Activated CD4-positive, alpha-beta memory T cell treated with anti-CD3 and anti-CD28 coated beads, Interleukin-2, amount 10 ng/mL, durations not matched to agents 7 days and 5 days (primary cell): ENCODE measurements at regions of chr4 and their contacts with region 1.

Region 1: DNA sequence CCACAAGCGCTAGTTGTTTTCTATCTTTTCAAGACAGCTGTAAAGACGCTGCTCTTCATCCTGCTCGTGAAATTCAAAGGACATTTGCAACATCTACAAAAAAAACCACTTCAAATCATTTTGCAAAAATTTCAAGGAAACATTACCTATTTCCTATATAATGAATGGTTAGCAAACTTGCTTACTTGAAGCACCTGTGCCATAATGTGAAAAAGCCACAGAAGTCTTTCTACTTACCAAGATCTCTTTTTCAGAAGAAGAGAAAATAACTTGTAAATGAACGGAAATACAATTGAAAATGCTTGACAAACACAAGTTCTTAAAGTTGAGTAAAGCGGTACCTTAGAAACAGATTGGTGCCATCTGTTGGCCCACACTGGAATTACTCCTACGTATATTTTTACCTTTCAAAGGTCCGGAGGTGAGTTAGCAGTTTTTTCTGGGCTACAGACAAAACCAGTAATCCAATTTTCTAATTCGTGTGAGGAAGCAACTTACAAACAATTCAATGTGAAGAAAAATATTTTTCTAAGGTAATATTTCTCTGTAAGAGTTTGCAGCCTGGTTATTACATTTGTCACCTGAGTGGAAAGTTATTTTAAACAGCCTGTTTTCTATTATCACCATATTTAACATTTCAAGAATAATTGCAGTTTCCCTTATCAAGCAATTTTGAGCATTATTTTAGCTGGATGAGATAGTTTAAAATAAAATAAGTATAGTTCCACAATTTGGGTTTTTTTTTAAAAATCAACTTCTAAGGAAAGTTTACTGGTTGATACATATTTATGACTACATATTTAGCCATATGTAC is at the start of gene TLR6:
- DNase-seq: peak; percentile 70
- H3K4me3 Mint-ChIP-seq: peak within 1 kb of the TSS; percentile 77
- H3K27ac Mint-ChIP-seq: peak within 1 kb of the TSS; percentile 85
- H3K4me1 Mint-ChIP-seq: peaks cover 39% of the 10 kb centered on the region
- H3K27me3 Mint-ChIP-seq: peaks cover 3% of the 10 kb centered on the region
- total RNA-seq, gene TLR6: 3.9 to 5.4 TPM

Region 2: GRCh38 chr4:38759113-38759789 is 97.5 kb before region 1 on chr4:
- CTCF ChIA-PET with region 1: interaction called, 80 read pairs
- POLR2A ChIA-PET with region 1: interaction called, 14 read pairs
- DNase-seq: peak; percentile 61
- H3K4me3 Mint-ChIP-seq: no peak overlapping the region
- H3K27ac Mint-ChIP-seq: no peak overlapping the region
- H3K4me1 Mint-ChIP-seq: peaks cover 21% of the 10 kb centered on the region
- H3K27me3 Mint-ChIP-seq: no peaks in the 10 kb centered on the region

Region 3: GRCh38 chr4:38782452-38783108 is 74.2 kb before region 1 on chr4 and contains the start of gene TLR10:
- CTCF ChIA-PET with region 1: interaction called, 11 read pairs
- POLR2A ChIA-PET with region 1: interaction called, 3 read pairs
- DNase-seq: peak; percentile 32
- H3K4me3 Mint-ChIP-seq: no peak within 1 kb of the TSS
- H3K27ac Mint-ChIP-seq: no peak within 1 kb of the TSS
- H3K4me1 Mint-ChIP-seq: peaks cover 2% of the 10 kb centered on the region
- H3K27me3 Mint-ChIP-seq: peaks cover 6% of the 10 kb centered on the region
- total RNA-seq, gene TLR10: 0.40 to 0.53 TPM

Region 4: DNA sequence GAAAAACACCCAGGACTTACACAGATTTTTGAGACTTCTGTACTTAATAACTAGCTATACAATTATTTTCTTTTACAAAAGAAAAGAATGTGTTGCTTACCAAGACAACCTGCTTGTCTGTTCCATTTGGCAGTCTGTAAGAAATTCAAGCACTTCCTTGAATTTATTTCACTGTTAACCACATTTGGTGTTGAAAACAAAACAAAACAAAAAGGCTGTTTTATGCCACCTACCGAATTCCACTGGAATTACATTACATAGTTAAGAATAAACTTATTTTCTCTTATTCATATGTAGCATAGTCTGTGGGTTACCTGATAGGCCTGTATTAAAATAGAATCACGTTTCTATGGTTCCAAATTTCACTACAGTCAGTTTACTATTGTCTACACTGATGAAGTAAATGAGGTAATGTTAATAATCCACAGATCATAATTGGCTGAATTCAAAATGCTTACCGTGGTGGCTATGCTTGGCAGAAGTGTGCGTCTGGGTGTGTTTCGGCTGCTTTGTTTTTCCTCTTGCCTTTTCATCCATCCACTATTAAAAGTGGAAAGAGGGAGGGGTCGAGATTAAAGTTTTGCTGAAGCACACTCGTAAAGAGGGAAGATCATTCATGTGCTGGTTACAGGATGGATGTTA is 52.0 kb before region 1 on chr4 and contains the start of gene TLR1:
- CTCF ChIA-PET with region 1: interaction called, 21 read pairs
- POLR2A ChIA-PET with region 1: interaction called, 18 read pairs
- DNase-seq: no peak
- H3K4me3 Mint-ChIP-seq: peak within 1 kb of the TSS; percentile 80
- H3K27ac Mint-ChIP-seq: peak within 1 kb of the TSS; percentile 85
- H3K4me1 Mint-ChIP-seq: peaks cover 37% of the 10 kb centered on the region
- H3K27me3 Mint-ChIP-seq: no peaks in the 10 kb centered on the region
- total RNA-seq, gene TLR1: 11.7 to 12.0 TPM

Region 5: GRCh38 chr4:38842994-38843393 is 13.7 kb before region 1 on chr4:
- CTCF ChIA-PET with region 1: interaction called, 10 read pairs
- POLR2A ChIA-PET with region 1: interaction called, 3 read pairs
- DNase-seq: no peak
- H3K4me3 Mint-ChIP-seq: no peak overlapping the region
- H3K27ac Mint-ChIP-seq: no peak overlapping the region
- H3K4me1 Mint-ChIP-seq: peaks cover 14% of the 10 kb centered on the region
- H3K27me3 Mint-ChIP-seq: no peaks in the 10 kb centered on the region

Region 6: DNA sequence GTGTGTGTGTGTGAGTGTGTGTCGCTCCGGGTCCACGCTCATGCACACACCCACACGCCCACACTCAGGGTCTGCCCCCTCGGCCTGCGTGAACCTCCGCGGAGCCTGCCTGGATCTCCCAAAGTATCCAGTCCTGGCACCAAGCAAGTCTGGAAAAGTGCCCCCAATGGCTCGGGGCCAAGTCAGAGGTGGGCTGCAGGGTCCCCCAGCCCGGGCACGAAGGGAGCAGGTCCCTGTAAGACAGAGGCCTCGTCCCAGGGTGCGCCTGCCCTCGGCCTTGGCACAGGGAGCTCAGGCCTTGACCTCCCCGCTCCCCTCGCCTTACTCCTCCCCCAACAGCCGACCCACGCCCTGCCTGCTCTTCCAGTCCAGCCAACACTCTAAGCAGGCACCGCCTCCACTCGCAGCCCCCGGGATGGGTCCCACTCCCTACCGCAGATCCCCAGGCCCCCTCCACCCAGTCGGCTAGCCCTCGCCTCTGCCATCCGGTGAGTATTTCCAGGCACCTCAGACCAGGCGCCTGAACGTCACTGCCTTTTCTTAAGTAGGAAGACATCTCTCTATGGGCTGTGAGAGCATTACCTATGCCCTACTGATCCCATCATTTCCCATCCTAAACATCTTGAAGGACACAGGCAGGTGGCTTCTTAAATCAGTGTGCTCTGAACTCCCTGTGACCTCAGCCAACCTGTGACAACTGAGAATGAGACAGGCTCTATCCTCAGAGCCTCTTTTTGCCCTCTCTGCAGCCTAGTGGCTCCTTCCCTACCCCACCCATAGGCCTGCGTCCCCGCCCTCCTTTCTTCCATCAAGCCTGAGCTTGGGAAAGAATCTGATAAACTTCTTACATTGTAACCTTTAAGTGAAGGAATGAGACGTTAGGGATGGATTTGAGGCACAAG is 11.6 kb after region 1 on chr4:
- CTCF ChIA-PET with region 1: interaction called, 44 read pairs
- POLR2A ChIA-PET with region 1: interaction called, 4 read pairs
- DNase-seq: no peak
- H3K4me3 Mint-ChIP-seq: peak overlapping the region; percentile 63
- H3K27ac Mint-ChIP-seq: no peak overlapping the region
- H3K4me1 Mint-ChIP-seq: peaks cover 17% of the 10 kb centered on the region
- H3K27me3 Mint-ChIP-seq: peaks cover 47% of the 10 kb centered on the region

Region 7: DNA sequence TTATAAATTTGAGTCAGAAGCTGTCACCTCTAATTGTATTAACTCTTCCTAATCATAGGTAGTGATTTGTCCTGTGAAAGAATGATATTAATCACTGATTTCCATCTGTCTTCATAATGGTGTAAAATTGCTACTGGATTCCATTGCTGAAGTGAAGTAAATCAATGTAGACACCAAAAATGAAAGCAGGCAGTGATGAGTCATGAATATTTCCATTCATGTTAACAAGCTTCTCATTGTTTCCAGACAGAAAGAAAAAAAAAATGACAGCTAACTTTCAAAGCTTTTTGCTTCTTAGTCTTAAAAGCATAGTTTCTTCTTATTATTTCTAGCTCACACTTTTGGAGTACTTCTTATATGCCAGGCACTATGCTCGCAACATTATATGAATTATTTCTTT is 32.4 kb after region 1 on chr4:
- CTCF ChIA-PET with region 1: interaction called, 10 read pairs
- POLR2A ChIA-PET with region 1: no interaction called
- DNase-seq: no peak
- H3K4me3 Mint-ChIP-seq: no peak overlapping the region
- H3K27ac Mint-ChIP-seq: peak overlapping the region; percentile 8
- H3K4me1 Mint-ChIP-seq: peaks cover 15% of the 10 kb centered on the region
- H3K27me3 Mint-ChIP-seq: no peaks in the 10 kb centered on the region

Region 8: GRCh38 chr4:39036172-39036571 is 179.4 kb after region 1 on chr4:
- CTCF ChIA-PET with region 1: no interaction called
- POLR2A ChIA-PET with region 1: no interaction called
- DNase-seq: no peak
- H3K4me3 Mint-ChIP-seq: no peak overlapping the region
- H3K27ac Mint-ChIP-seq: no peak overlapping the region
- H3K4me1 Mint-ChIP-seq: peaks cover 27% of the 10 kb centered on the region
- H3K27me3 Mint-ChIP-seq: no peaks in the 10 kb centered on the region